Mammary epithelial cell (primary cell): ENCODE measurements at regions of chr13 and their contacts with region 1.

Region 1: DNA sequence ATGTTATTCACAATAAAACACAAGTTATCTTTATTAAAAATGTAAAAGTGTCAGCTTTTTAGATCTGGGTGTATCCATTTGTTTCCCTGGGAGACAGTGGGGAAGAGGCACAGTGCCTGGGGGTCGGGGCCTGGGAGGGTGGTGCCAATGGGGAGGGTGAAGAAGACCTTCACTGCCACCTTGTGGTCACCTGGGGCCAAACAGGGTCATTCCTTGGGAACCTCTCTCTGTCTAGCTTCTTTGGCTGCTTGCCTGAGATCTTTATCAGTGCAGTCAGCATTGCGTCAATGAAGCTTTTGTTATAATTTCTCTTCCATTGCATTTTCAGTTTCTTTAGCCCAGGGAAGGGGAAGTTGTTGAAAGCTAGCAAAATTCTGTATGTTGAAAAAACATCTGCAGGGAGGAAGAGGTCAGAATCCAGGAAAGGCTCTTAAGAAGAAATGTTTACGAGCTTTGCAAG is 39.1 kb downstream of the PCDH8 start:
- DNase-seq: peak; percentile 84
- H3K4me3 ChIP-seq: no peak overlapping the region
- H3K27ac ChIP-seq: no peak overlapping the region
- H3K4me1 ChIP-seq: no peaks in the 10 kb centered on the region
- H3K27me3 ChIP-seq: no peaks in the 10 kb centered on the region
- CTCF ChIP-seq: peak; percentile 69 to 86

Region 2: GRCh38 chr13:52665325-52665724 is 144.0 kb before region 1 on chr13:
- CTCF ChIA-PET with region 1: no interaction called
- dilution Hi-C with region 1: no loop called
- in situ Hi-C with region 1: no loop called
- intact Hi-C with region 1: loop called (anchors 1 kb)
- DNase-seq: peak; percentile 37
- H3K4me3 ChIP-seq: no peak overlapping the region
- H3K27ac ChIP-seq: no peak overlapping the region
- H3K4me1 ChIP-seq: no peaks in the 10 kb centered on the region
- H3K27me3 ChIP-seq: no peaks in the 10 kb centered on the region
- CTCF ChIP-seq: peak; percentile 38 to 53

Region 3: GRCh38 chr13:52686381-52686780 is 123.0 kb before region 1 on chr13:
- CTCF ChIA-PET with region 1: no interaction called
- dilution Hi-C with region 1: no loop called
- in situ Hi-C with region 1: loop called in 1 of 2 experiments (anchors 10 kb)
- intact Hi-C with region 1: no loop called
- DNase-seq: no peak
- H3K4me3 ChIP-seq: no peak overlapping the region
- H3K27ac ChIP-seq: no peak overlapping the region
- H3K4me1 ChIP-seq: no peaks in the 10 kb centered on the region
- H3K27me3 ChIP-seq: no peaks in the 10 kb centered on the region
- CTCF ChIP-seq: no peak

Region 4: GRCh38 chr13:52743988-52744387 is 65.4 kb before region 1 on chr13:
- CTCF ChIA-PET with region 1: no interaction called
- dilution Hi-C with region 1: no loop called
- in situ Hi-C with region 1: no loop called
- intact Hi-C with region 1: loop called (anchors 5 kb)
- DNase-seq: no peak
- H3K4me3 ChIP-seq: no peak overlapping the region
- H3K27ac ChIP-seq: no peak overlapping the region
- H3K4me1 ChIP-seq: peaks cover 2% of the 10 kb centered on the region
- H3K27me3 ChIP-seq: peaks cover 8% of the 10 kb centered on the region
- CTCF ChIP-seq: no peak